Activated CD4-positive, alpha-beta memory T cell treated with anti-CD3 and anti-CD28 coated beads for 36 hours (primary cell): ENCODE measurements at regions of chrX and their contacts with region 1.

Region 1: GRCh38 chrX:47233337-47234113 is 716 bp downstream of the USP11 start:
- DNase-seq: peak; percentile 96
- H3K4me3 Mint-ChIP-seq: peak overlapping the region; percentile 83
- H3K27ac Mint-ChIP-seq: peak overlapping the region; percentile 87
- H3K4me1 Mint-ChIP-seq: peaks cover 25% of the 10 kb centered on the region
- H3K27me3 Mint-ChIP-seq: no peaks in the 10 kb centered on the region

Region 2: GRCh38 chrX:47217642-47218279 is 15.8 kb before region 1 on chrX:
- CTCF ChIA-PET with region 1: no interaction called
- POLR2A ChIA-PET with region 1: interaction called, 14 read pairs
- intact Hi-C with region 1: loop called (anchors 1 kb)
- DNase-seq: peak; percentile 97
- H3K4me3 Mint-ChIP-seq: peak overlapping the region; percentile 87
- H3K27ac Mint-ChIP-seq: peak overlapping the region; percentile 97
- H3K4me1 Mint-ChIP-seq: peaks cover 32% of the 10 kb centered on the region
- H3K27me3 Mint-ChIP-seq: no peaks in the 10 kb centered on the region

Region 3: GRCh38 chrX:47247206-47247998 is 13.9 kb after region 1 on chrX:
- CTCF ChIA-PET with region 1: no interaction called
- POLR2A ChIA-PET with region 1: interaction called, 4 read pairs
- intact Hi-C with region 1: loop called (anchors 1 kb)
- DNase-seq: peak; percentile 60
- H3K4me3 Mint-ChIP-seq: no peak overlapping the region
- H3K27ac Mint-ChIP-seq: peak overlapping the region; percentile 42
- H3K4me1 Mint-ChIP-seq: peaks cover 22% of the 10 kb centered on the region
- H3K27me3 Mint-ChIP-seq: no peaks in the 10 kb centered on the region

Region 4: GRCh38 chrX:47311932-47312774 is 78.6 kb after region 1 on chrX:
- CTCF ChIA-PET with region 1: interaction called, 3 read pairs
- POLR2A ChIA-PET with region 1: no interaction called
- intact Hi-C with region 1: loop called (anchors 5 kb)
- DNase-seq: peak; percentile 73
- H3K4me3 Mint-ChIP-seq: no peak overlapping the region
- H3K27ac Mint-ChIP-seq: no peak overlapping the region
- H3K4me1 Mint-ChIP-seq: no peaks in the 10 kb centered on the region
- H3K27me3 Mint-ChIP-seq: no peaks in the 10 kb centered on the region

Region 5: GRCh38 chrX:47658684-47659515 is 425.4 kb after region 1 on chrX and contains the start of gene UXT:
- CTCF ChIA-PET with region 1: no interaction called
- POLR2A ChIA-PET with region 1: no interaction called
- intact Hi-C with region 1: loop called (anchors 2 kb)
- DNase-seq: peak; percentile 96
- H3K4me3 Mint-ChIP-seq: peak within 1 kb of the TSS; percentile 87
- H3K27ac Mint-ChIP-seq: peak within 1 kb of the TSS; percentile 98
- H3K4me1 Mint-ChIP-seq: peaks cover 48% of the 10 kb centered on the region
- H3K27me3 Mint-ChIP-seq: no peaks in the 10 kb centered on the region
- total RNA-seq, gene UXT: 198 to 210 TPM